ENCODE measurements at regions of chrX and their contacts with region 1.

Region 1: GRCh38 chrX:107672955-107673378 is 44.7 kb downstream of the PRPS1 start:
- DNase-seq: peak; percentile 65
- CTCF ChIP-seq: peak; percentile 55

Region 2: DNA sequence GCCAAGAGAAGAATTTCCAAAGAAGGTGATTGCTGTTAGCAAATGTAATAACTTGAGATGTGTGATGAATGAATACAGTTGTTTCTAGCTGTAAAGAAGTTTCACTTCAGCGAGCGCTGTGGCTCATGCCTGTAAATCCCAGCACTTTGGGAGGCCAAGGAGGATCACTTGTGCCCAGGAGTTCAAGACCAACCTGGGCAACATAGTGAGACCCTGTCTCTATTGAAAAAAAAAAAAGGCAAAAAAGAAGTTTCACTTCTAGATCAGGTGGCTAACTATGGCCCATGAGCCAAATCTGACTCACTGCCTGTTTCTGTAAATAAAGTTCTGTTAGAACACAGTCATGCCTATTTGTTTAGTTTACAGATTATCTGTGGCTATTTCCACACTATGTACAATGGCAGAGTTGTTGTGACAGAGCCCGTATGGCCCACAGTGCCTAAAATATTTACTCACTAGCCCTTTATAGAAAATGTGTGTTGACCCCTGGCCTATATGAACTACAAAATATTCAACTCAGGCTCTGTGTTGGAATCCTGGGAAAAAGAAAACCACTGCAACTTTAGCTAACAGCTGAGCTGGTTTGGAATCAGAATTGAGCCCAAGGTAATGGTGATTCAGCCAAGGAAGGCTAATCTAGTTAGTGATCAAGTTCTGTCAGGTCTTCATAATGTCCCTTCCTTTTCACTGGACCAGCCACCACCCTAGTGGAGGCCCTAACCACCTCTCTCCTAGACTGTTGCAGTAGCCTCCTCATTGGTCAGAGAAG is 98.7 kb before region 1 on chrX:
- CTCF ChIA-PET with region 1: no interaction called
- POLR2A ChIA-PET with region 1: no interaction called
- DNase-seq: no peak
- CTCF ChIP-seq: no peak

Region 3: DNA sequence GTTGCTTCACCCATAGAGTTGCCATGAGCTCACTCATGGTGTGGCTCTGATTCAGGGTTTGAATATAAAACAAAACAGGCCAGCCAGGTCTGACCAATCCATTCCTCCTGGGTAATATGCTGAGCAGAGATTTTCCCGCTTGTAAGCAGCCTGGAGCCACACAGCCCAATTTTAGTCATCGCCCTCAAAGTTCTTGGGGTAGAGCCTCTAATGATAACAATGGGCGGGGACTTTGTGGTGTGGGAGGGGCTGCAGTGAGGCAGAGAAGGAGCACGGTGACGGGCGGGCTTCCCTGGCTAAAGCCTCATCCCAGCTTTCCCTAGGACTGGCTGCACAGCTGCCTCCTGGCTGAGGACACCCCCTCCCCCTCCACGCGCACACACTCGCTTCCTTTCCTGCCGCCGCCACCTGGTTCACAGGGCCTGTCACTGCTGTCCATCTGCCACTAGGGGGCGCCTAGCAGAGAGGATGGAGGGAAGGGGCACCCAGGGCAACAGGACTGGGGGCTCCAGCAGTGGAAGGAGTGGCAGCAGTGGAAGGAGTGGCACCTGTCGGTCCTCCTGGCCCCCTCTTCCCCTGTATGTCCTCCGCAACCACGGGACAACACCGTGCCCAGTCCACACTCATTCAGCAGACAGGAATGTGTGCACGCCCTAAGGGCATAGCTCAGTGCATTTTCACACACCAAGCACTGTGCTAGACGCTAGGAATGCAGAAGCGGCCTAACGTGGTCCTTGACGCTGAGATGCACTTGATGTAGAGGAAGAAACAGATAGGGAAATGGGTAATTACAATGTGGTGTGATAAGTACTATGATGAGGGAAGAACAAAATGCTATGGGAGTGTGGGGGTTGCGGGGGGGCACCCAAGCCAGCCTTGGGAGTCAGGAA is 17.9 kb before region 1 on chrX:
- CTCF ChIA-PET with region 1: interaction called, 46 read pairs
- POLR2A ChIA-PET with region 1: no interaction called
- DNase-seq: peak; percentile 25
- CTCF ChIP-seq: peak; percentile 77

Region 4: DNA sequence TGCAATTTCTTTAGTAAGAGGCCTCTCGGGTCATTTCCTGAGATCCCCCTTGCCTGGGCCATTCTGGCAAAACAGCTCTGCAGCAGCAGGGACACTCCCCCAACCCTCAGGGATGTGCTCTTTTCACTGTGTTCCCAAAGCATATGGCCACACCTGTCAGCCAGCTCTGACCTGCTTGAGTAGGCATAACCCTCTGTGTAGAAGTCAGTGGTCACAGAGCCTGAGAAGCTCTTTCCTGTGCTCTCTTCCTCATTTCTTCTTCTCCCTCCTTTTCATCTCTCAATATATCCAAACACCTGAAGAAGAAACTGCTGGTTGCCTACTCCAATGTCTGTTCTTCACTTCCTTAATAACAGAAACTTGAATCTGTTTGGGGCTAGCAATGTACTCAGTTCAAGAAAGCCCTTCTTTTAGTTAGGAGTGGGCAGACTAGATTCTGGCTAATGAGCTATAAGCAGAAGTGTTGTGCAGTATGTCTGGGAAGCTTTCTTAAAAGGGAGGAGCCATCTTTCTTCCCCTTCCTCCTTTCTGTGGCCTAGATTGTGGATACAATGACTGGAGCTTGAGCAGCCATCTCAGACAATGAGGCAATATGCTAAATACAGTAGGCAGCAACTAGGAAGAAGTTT is 28.6 kb after region 1 on chrX:
- CTCF ChIA-PET with region 1: interaction called, 11 read pairs
- POLR2A ChIA-PET with region 1: no interaction called
- DNase-seq: no peak
- CTCF ChIP-seq: no peak

Region 5: GRCh38 chrX:107710617-107711391 is 37.8 kb after region 1 on chrX:
- CTCF ChIA-PET with region 1: interaction called, 304 read pairs
- POLR2A ChIA-PET with region 1: interaction called, 59 read pairs
- DNase-seq: peak; percentile 74
- CTCF ChIP-seq: no peak

Region 6: DNA sequence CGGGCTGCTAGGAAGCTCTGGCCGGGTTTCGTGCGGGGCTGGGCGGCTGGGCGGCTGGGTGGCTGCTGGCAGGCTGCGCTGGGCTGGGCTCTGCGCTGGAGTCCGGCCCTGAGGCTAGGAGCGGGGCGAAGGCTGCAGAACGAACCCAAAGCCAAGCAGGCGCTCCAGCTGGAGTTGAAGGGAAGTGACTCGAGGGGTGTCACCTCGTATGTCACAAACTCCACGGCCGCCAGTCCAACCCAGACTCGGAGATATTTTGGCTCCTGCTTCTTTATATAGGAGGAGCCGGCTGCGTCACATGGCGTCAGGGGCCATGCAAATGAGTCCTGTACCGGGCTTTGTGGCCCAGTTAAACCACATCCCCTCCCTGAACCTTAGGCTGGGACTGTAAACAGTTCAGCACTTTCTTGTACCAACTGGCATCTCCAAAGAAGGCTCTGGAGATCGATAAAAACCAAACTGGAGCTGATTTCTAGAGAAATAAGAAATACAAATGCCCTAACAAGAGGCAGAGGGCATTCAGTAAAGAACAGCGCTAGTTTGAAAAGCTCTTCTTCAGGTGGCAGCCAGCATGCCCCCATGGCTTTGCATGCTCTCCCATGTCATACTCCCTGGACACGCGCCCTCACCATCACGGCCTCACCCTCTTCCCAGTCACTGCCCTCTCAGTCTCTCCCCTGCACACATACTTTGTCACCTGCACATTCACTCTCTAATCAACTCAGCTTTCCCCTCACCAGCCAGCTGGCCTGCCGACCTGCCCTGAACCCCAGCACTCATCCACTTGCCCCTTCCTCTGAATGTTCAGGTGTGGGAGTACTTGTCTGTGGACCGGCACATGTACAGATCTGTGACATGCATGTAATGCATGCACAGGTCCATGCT is 44.1 kb after region 1 on chrX:
- CTCF ChIA-PET with region 1: interaction called, 304 read pairs
- POLR2A ChIA-PET with region 1: interaction called, 59 read pairs
- DNase-seq: peak; percentile 75
- CTCF ChIP-seq: no peak

Region 7: DNA sequence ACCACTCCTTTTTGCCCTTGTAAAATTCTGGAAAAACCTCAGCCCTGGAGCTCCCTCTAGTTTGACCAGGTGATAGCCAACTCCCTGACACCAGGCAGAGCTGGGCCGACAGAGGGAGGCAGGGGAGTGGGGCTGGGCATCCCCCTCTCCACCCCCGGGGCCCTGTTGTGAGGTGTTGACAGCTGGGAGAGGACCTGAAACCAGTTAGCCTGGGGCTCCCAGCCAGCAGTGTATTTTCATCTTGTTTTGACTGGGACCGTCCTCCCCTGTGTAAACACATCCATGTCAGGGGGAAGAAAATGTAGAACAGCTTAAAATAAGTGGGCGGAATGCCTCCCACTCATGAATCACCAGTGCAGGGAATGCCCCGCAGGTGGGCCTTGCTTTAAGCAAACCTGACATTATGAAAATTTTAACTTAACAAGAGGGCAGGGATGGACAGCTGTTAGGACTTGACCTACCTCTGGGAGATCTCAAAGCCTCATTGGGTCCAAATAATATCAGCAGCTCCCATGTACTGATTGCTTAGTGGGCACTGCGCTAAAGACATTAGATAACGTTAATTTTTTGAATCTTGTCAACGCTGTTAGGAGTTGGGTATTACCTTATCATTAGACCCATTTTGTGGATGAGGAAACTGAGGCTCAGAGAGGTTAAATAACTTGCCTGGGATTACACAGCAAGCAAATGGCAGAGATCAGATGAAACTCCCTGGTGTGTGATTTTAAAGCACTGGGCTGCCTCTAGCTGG is 56.8 kb after region 1 on chrX:
- CTCF ChIA-PET with region 1: interaction called, 14 read pairs
- POLR2A ChIA-PET with region 1: no interaction called
- DNase-seq: peak; percentile 39
- CTCF ChIP-seq: no peak

Region 8: GRCh38 chrX:107776649-107777535 is 103.9 kb after region 1 on chrX:
- CTCF ChIA-PET with region 1: interaction called, 44 read pairs
- POLR2A ChIA-PET with region 1: no interaction called
- DNase-seq: peak; percentile 76
- CTCF ChIP-seq: peak; percentile 40

Region 9: GRCh38 chrX:107894038-107894437 is 221.1 kb after region 1 on chrX:
- CTCF ChIA-PET with region 1: no interaction called
- POLR2A ChIA-PET with region 1: no interaction called
- DNase-seq: peak; percentile 32
- CTCF ChIP-seq: peak; percentile 36

Region 10: DNA sequence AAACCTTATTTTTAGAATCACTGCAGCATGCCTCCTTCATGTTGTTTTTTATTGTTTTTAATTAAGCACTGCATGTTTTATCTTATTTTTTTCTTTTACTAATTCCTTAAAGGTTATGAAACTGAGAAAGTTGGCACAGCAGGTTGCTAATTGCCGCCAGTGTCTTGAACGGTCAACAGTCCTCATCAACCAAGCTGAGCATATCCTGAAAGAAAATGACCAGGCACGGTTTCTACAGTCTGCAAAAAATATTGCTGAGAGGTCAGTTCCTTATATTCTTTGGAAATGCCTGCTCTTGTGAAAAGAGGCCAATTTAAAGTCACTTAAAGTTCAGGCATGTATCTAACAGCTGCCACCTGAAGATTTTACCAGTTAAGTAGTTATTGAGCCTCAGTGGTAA is 232.4 kb after region 1 on chrX:
- CTCF ChIA-PET with region 1: no interaction called
- POLR2A ChIA-PET with region 1: no interaction called
- DNase-seq: no peak
- CTCF ChIP-seq: no peak

Measured in GM10248 (cell line).